ENCODE measurements at regions of chr15 and their contacts with region 1.

Region 1: DNA sequence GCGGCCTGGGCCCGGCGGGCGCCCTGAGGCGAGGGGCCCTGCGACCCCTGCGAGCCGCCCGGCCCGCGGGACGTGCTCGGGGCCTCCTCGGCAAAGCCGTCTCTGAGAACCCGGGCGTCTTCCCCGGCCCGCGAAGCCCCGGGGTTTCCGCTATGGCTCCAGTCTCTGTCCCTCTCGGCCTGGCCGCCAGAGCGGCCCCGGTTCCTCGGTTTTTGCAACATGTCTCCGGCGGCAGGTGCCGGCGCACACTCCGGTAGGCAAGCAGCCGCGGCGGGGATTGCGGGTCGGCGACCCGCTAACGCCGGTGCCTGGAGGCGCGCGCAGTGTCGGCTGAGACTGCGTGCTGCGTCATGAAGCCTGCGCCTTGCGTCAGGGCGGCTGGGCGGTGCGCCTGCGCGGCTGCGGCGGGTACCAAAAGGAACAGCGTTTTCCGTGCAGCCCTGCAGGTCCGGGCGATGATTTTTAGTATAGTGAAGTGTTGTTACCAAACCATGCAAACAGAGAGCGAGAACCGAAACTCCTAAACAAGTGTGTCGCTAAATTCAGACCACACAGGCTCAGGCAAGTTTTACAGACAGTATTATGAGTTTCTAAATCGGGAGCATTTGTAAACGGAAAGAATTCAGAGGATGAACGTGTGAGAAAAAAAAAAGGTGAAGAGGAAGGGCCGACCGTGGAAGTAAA is at the start of gene NSMCE3:
- DNase-seq: peak; percentile 95
- H3K4me3 ChIP-seq: peak within 1 kb of the TSS; percentile 98
- H3K27ac ChIP-seq: peak within 1 kb of the TSS; percentile 99
- H3K4me1 ChIP-seq: peaks cover 28% of the 10 kb centered on the region
- CTCF ChIP-seq: no peak
- total RNA-seq, gene NSMCE3: 27.2 and 29.4 TPM in 2 replicates

Region 2: DNA sequence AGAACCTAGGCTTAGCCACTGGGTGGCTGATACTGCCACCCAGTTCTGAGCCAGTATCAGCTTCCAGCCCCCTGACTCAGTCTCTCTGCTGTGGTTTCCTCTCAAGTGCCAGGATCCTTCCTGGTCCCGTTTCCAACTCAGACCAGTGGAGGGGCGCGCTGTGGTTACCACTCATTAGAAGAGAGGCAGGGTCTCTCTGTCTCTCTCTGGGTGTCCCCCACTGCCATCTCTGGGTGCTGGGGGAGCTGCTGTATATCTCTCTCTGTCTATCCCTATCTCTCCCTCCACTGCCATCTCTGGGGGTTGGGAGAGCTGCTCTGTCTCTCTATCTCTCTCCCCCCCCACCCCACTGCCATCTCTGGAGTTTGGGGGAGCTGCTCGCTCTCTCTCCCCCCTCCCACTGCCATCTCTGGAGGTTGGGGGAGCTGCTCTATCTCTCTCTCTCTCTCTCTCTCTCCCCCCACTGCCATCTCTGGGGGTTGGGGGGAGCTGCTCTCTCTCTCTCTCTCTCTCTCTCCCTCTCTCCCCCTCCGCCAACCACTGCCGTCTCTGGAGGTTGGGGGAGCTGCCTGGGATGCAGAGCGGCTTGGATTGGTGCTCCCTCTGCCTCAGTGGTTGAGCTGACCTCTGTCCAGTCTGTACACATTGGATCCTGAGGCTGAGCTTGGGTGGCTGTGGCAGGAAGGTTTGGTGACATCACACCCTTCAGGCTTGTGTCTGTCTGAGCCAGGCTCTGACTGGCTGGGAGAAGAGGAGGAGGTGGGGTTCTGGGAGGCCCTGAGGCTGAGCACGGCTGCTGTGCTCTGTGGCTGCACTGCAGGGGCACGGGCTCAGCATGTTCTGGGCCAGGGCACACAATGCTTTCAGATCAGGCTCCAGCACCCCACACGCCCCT is 285.0 kb before region 1 on chr15:
- CTCF ChIA-PET with region 1: no interaction called
- POLR2A ChIA-PET with region 1: no interaction called
- intact Hi-C with region 1: no loop called
- DNase-seq: no peak
- H3K4me3 ChIP-seq: no peak overlapping the region
- H3K27ac ChIP-seq: no peak overlapping the region
- H3K4me1 ChIP-seq: no peaks in the 10 kb centered on the region
- CTCF ChIP-seq: no peak

Region 3: GRCh38 chr15:29139540-29140459 is 129.8 kb before region 1 on chr15:
- CTCF ChIA-PET with region 1: no interaction called
- POLR2A ChIA-PET with region 1: interaction called, 3 read pairs
- intact Hi-C with region 1: loop called (anchors 10 kb)
- DNase-seq: peak; percentile 43
- H3K4me3 ChIP-seq: no peak overlapping the region
- H3K27ac ChIP-seq: no peak overlapping the region
- H3K4me1 ChIP-seq: no peaks in the 10 kb centered on the region
- CTCF ChIP-seq: peak; percentile 84

Region 4: DNA sequence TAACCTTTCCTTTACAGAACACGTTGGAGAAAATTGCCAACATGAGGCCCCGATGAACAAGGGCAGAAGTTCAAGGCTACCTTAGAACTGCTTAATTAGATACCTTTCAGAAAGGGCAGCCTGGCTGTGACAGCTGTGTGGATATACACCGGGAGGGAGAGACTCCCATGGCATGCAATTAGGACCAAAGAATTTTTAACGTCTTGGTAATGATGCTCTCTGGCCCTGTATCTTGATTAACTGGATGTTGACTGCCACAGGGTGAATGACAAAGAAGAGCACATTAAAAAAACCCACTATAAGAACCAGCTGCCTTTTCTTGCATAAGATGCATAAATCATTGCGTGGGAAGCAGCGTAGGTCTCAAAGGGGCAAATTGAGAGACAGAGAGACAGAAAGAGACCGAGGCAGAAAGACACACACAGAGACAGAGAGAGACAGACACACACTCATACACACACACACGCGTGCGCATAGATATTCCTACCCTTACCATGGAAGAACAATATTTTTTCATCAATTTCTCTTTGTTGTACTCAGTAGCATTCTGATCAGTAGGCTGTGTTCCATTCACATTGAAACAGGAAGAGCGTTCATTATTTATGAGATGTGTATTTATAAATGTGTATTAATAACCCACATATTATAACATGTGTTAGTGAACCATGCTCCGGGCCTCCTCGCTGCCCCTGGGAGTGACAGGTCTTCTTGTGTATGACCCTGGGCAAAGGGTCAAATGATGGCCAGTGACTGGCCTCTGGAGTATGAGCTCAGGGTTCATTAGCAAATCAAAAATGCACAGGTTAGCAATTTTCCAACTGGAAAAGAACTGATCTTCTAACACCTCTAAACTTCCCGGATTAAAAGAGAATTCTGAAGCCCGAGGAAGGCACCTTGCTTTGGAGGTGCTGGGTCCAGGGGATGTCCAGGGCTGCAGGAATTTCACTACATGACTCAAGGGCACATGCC is 118.8 kb before region 1 on chr15:
- CTCF ChIA-PET with region 1: no interaction called
- POLR2A ChIA-PET with region 1: no interaction called
- intact Hi-C with region 1: no loop called
- DNase-seq: no peak
- H3K4me3 ChIP-seq: no peak overlapping the region
- H3K27ac ChIP-seq: no peak overlapping the region
- H3K4me1 ChIP-seq: no peaks in the 10 kb centered on the region
- CTCF ChIP-seq: no peak

Region 5: DNA sequence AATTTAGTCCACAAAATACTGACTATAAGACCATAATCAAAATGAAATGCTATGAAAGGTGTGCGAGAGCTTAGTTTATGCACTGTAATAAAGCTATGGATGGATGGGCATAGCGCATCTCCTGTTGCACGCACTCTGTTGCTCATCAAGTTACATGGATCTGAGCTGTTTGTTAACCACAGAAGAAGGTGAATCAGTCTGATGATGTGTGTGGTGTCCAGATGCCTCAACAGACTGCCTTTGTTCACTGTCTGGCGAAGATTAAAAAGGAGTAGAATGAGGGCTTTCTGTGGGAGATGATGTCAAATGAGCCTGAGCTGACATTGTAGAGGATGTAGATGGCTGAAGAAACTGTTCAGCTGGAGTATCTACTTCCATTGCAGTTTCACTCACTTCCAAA is 36.1 kb before region 1 on chr15:
- CTCF ChIA-PET with region 1: no interaction called
- POLR2A ChIA-PET with region 1: no interaction called
- intact Hi-C with region 1: no loop called
- DNase-seq: no peak
- H3K4me3 ChIP-seq: no peak overlapping the region
- H3K27ac ChIP-seq: no peak overlapping the region
- H3K4me1 ChIP-seq: no peaks in the 10 kb centered on the region
- CTCF ChIP-seq: no peak

Region 6: DNA sequence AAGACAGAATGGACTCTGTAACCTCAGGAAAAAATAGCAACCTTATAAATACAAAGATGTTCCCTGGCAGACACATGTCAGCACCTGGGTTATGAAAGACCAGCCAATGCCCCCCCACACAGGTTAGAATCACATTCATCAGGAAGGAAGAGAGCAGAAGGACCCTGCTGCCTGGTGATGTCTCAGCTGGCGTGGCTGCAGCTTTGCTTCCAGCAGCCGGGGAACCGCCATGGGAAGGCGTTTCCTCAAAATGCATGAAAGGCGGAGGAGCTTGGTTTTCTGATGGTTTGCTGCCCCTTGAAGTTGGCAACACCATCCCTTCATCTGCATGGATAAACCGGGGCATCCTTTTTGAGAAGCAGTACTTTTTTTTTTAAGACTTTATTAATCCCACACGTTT is 10.9 kb after region 1 on chr15:
- CTCF ChIA-PET with region 1: no interaction called
- POLR2A ChIA-PET with region 1: interaction called, 11 read pairs
- intact Hi-C with region 1: no loop called
- DNase-seq: no peak
- H3K4me3 ChIP-seq: no peak overlapping the region
- H3K27ac ChIP-seq: no peak overlapping the region
- H3K4me1 ChIP-seq: no peaks in the 10 kb centered on the region
- CTCF ChIP-seq: no peak

Region 7: DNA sequence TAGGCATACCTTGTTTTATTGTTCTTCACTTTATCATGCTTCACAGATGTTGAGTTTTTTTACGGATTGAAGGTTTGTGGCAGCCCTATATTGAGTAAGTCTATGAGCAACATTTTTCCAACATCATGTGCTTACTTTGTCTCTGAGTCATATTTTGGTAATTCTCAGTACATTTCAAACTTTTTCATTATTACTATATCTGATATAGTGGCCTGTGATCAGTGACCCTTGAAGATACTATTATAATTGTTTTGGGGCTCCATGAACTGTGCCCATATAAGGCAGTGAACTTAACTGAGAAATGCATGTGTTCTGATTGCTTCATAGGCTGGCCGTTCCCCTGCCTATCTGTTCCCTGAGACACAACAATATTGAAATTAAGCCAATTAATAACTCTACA is 42.8 kb after region 1 on chr15:
- CTCF ChIA-PET with region 1: no interaction called
- POLR2A ChIA-PET with region 1: no interaction called
- intact Hi-C with region 1: no loop called
- DNase-seq: no peak
- H3K4me3 ChIP-seq: no peak overlapping the region
- H3K27ac ChIP-seq: no peak overlapping the region
- H3K4me1 ChIP-seq: no peaks in the 10 kb centered on the region
- CTCF ChIP-seq: no peak

Region 8: GRCh38 chr15:29324746-29325145 is 55.1 kb after region 1 on chr15:
- CTCF ChIA-PET with region 1: no interaction called
- POLR2A ChIA-PET with region 1: no interaction called
- intact Hi-C with region 1: loop called (anchors 1 kb)
- DNase-seq: no peak
- H3K4me3 ChIP-seq: no peak overlapping the region
- H3K27ac ChIP-seq: no peak overlapping the region
- H3K4me1 ChIP-seq: peaks cover 10% of the 10 kb centered on the region
- CTCF ChIP-seq: no peak

Region 9: DNA sequence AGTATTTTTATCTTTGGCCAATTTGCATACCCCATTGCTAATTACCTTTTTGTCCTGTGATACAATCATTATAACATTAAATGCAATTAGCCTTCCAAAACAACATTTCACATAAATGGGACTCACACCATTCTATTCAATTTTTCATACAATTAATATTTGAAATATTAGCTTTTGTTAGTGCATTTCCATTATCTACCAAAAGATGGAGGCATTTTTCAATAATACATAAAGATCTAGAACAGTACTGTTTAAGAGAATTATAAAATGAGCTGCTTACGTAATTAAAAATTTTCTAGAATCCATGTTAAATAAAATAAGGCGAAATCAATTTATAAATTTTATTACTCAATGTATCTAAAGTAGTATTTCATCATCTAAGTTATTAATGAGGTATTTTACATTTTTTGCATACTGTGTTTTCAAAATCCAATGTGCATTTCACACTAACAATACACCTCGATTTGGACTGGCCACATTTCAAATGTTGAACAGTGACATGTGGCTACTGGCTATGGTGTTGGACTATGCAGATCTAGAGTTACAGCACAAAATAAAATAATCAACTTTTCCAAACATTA is 478.3 kb after region 1 on chr15:
- CTCF ChIA-PET with region 1: no interaction called
- POLR2A ChIA-PET with region 1: no interaction called
- intact Hi-C with region 1: loop called (anchors 10 kb)
- DNase-seq: peak; percentile 11
- H3K4me3 ChIP-seq: no peak overlapping the region
- H3K27ac ChIP-seq: no peak overlapping the region
- H3K4me1 ChIP-seq: no peaks in the 10 kb centered on the region
- CTCF ChIP-seq: peak; percentile 81

Measured in OCI-LY7 (cell line).